ENCODE measurements at regions of chr9 and their contacts with region 1.

Region 1: DNA sequence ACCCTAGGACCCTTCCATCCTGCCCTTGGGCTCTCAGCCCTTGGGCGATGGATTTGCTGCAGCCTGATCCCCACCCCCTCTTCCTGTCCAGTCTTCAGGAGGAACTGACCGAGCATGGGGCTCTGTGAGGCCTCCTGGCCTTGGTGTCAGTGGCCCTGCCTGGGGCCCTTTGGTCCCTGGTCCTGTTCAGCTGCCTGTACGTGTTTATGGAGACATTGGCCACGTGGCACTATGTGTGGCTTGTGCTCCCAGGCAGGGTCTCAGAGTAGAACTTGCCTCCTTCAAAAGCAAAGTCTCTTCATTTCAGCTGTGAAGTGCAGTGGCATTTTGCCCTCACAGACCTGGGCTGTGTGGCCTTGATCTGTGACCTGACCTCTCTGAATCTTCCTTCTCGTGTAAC is 11.1 kb downstream of the FCN2 start:
- DNase-seq: peak; percentile 48

Region 2: DNA sequence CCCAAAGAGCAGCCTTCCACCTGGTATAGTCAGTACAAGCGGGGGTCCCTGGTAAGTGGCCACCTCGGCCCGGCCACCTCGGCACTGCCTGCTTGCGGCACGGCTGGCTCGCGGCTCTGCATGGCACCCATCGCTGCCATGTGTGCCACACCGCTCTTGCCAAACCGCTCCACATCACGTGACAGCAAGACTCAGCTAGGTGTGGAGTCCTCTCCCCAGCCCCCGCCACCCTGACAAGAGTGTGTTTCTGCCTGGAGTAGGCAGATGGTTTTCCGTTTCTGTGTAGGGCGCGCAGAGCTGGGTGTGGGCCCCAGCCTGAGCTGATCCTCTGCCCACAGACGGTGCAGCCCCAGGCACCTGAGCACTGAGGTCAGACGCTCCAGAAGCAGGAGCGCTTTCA is 61.6 kb before region 1 on chr9:
- intact Hi-C with region 1: no loop called
- DNase-seq: no peak

Region 3: GRCh38 chr9:134851020-134851419 is 40.7 kb before region 1 on chr9:
- intact Hi-C with region 1: loop called in 1 of 2 experiments (anchors 1 kb)
- DNase-seq: peak; percentile 76